CD8-positive, alpha-beta T cell (primary cell): ENCODE measurements at regions of chr22 and their contacts with region 1.

Region 1: DNA sequence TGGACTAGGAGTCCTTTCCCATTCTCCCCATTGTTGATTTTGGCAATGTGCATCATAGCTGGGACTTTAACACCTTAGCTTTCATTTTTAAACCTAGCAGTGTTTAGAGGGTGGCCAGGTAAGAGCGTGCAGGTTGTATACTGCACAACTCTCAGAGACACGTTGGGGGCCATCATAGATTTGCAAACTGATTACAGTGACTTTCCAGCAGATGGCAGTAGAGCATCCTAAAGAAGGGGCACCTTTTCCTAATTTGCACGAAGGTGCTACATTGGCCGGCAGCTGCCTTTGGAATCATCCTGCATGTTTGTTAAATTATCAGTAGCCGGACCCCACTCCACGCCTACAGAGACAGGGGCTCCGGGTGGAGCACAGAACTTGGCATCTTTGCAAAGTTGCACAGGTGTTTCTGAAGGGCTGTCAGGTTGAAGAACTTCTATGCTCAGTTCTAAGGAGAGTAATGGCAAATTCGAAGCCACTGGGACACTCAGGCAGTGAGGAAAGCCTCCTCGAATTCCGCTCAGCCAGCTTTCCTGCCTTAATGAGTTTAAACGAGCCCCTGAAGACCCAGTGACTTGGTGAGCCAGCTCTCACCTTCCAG is 7.7 kb downstream of the LHFPL7 start:
- DNase-seq: peak in 5 of 9 experiments; percentile 7 to 68 (median 23)
- ATAC-seq: peak; percentile 56
- H3K4me3 ChIP-seq: no peak overlapping the region
- H3K4me3 Mint-ChIP-seq: no peak overlapping the region
- H3K27ac ChIP-seq: no peak overlapping the region
- H3K27ac Mint-ChIP-seq: no peak overlapping the region
- H3K4me1 ChIP-seq: no peaks in the 10 kb centered on the region
- H3K4me1 Mint-ChIP-seq: no peaks in the 10 kb centered on the region
- H3K27me3 ChIP-seq: no peaks in the 10 kb centered on the region
- H3K27me3 Mint-ChIP-seq: peaks cover 2% of the 10 kb centered on the region
- CTCF ChIP-seq: peak; percentile 82

Region 2: GRCh38 chr22:24400726-24401596 is 537.9 kb before region 1 on chr22:
- CTCF ChIA-PET with region 1: no interaction called
- POLR2A ChIA-PET with region 1: no interaction called
- intact Hi-C with region 1: no loop called
- DNase-seq: peak in 1 of 9 experiments; percentile 18
- ATAC-seq: no peak
- H3K4me3 ChIP-seq: no peak overlapping the region
- H3K4me3 Mint-ChIP-seq: peak overlapping the region; percentile 43
- H3K27ac ChIP-seq: no peak overlapping the region
- H3K27ac Mint-ChIP-seq: peak overlapping the region; percentile 37
- H3K4me1 ChIP-seq: peaks cover 2% of the 10 kb centered on the region
- H3K4me1 Mint-ChIP-seq: peaks cover 8% of the 10 kb centered on the region
- H3K27me3 ChIP-seq: no peaks in the 10 kb centered on the region
- H3K27me3 Mint-ChIP-seq: no peaks in the 10 kb centered on the region
- CTCF ChIP-seq: no peak

Region 3: DNA sequence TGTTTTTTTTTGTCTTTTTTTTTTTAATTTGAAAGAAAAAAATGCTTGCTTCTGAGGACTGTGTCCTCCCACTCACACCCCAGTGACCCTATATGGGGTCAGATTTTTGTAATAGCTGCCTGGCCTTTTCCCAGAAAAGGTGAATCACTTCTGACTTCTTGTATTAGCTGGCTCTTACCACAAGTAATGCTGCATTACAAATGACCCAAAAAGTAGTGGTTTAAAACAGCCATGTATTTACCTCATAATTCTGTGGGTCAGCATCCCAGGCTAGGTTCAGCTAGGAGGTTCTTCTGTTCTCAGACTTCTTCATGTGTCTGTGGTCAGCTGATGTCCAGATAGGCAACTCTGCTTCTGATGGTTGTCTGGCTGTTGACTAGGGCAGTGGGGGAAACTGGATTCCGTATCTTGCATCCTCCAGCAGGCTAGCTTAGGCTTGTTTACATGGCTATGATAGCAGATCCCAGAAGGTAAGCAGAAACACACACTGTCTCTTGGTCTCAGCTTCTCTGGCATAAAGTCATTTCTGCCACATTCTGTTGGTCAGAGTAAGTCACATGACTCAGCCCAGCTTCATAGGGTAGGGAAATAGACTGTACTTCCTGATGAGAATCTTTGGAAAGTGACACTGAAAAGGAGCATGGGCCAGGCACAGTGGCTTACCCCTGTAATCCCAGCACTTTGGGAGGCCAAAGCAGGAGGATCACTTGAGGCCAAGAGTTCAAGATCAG is 11.8 kb before region 1 on chr22:
- CTCF ChIA-PET with region 1: interaction called, 20 read pairs
- POLR2A ChIA-PET with region 1: no interaction called
- intact Hi-C with region 1: no loop called
- DNase-seq: no peak
- ATAC-seq: no peak
- H3K4me3 ChIP-seq: no peak overlapping the region
- H3K4me3 Mint-ChIP-seq: no peak overlapping the region
- H3K27ac ChIP-seq: no peak overlapping the region
- H3K27ac Mint-ChIP-seq: no peak overlapping the region
- H3K4me1 ChIP-seq: no peaks in the 10 kb centered on the region
- H3K4me1 Mint-ChIP-seq: no peaks in the 10 kb centered on the region
- H3K27me3 ChIP-seq: no peaks in the 10 kb centered on the region
- H3K27me3 Mint-ChIP-seq: peaks cover 15% of the 10 kb centered on the region
- CTCF ChIP-seq: no peak

Region 4: GRCh38 chr22:25067851-25068421 is 129.1 kb after region 1 on chr22:
- CTCF ChIA-PET with region 1: no interaction called
- POLR2A ChIA-PET with region 1: no interaction called
- intact Hi-C with region 1: no loop called
- DNase-seq: peak; percentile 73 to 97 (median 87)
- ATAC-seq: peak; percentile 85
- H3K4me3 ChIP-seq: peak overlapping the region; percentile 1 to 40
- H3K4me3 Mint-ChIP-seq: peak overlapping the region; percentile 77
- H3K27ac ChIP-seq: peak overlapping the region; percentile 69 to 72
- H3K27ac Mint-ChIP-seq: peak overlapping the region; percentile 99
- H3K4me1 ChIP-seq: peaks cover 67% of the 10 kb centered on the region
- H3K4me1 Mint-ChIP-seq: peaks cover 94% of the 10 kb centered on the region
- H3K27me3 ChIP-seq: no peaks in the 10 kb centered on the region
- H3K27me3 Mint-ChIP-seq: no peaks in the 10 kb centered on the region
- CTCF ChIP-seq: no peak